Endothelial cell of umbilical vein (primary cell): ENCODE measurements at regions of chr10 and their contacts with region 1.

Region 1: GRCh38 chr10:28628184-28628893 is 49.0 kb upstream of the BAMBI start:
- DNase-seq: peak; percentile 69
- H3K4me3 ChIP-seq: no peak overlapping the region
- H3K27ac ChIP-seq: no peak overlapping the region
- H3K4me1 ChIP-seq: no peaks in the 10 kb centered on the region
- H3K27me3 ChIP-seq: peaks cover 7 to 10% of the 10 kb centered on the region in 2 experiments
- CTCF ChIP-seq: peak; percentile 89 to 91
- POLR2A ChIP-seq: no peak

Region 2: DNA sequence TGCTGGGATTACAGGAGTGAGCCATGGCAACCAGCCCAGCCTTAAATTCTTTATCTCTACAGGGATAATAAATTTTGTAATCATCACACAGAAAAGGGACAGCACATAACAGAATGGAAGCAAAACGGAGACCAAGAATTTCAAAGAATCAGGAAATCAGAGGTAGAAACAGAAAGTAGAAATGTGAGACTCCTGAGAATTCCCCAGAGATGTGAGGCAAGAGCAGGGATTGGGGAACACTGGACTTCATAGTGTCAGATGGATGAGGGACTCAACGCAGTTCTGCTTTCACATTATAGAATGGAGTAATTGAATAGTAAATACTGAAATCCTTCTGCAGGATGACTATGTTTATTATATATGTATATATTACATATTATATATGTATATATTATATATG is 273.0 kb before region 1 on chr10:
- CTCF ChIA-PET with region 1: no interaction called
- POLR2A ChIA-PET with region 1: no interaction called
- dilution Hi-C with region 1: no loop called
- intact Hi-C with region 1: no loop called
- DNase-seq: no peak
- H3K4me3 ChIP-seq: no peak overlapping the region
- H3K27ac ChIP-seq: no peak overlapping the region
- H3K4me1 ChIP-seq: no peaks in the 10 kb centered on the region
- H3K27me3 ChIP-seq: no peaks in the 10 kb centered on the region
- CTCF ChIP-seq: no peak
- POLR2A ChIP-seq: no peak

Region 3: DNA sequence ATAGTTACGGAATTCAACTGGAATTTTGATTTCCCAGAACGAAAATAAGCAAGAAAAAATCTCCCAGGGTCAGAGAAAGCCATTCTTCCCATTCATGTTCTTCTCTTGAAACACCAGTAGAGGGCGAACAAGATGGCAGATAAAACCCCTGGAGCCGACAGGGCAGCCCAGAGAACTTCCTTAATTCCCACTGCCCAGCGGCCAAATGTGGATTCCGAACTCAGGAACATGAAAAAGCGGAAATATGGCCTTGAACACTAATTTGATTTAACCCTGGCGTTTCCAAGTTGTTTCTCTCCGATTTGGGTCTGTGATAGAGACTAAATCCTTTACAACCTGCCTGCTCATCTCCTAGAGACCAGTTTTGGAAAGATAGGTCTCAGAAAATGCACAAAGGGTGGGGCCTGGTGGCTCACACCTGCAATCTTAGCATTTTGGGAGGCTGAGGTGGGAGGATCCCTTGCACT is 196.1 kb before region 1 on chr10:
- CTCF ChIA-PET with region 1: no interaction called
- POLR2A ChIA-PET with region 1: no interaction called
- dilution Hi-C with region 1: no loop called
- intact Hi-C with region 1: loop called (anchors 5 kb)
- DNase-seq: peak; percentile 65
- H3K4me3 ChIP-seq: no peak overlapping the region
- H3K27ac ChIP-seq: no peak overlapping the region
- H3K4me1 ChIP-seq: no peaks in the 10 kb centered on the region
- H3K27me3 ChIP-seq: peaks cover 1% of the 10 kb centered on the region in 2 experiments
- CTCF ChIP-seq: peak; percentile 69 to 76
- POLR2A ChIP-seq: no peak

Region 4: DNA sequence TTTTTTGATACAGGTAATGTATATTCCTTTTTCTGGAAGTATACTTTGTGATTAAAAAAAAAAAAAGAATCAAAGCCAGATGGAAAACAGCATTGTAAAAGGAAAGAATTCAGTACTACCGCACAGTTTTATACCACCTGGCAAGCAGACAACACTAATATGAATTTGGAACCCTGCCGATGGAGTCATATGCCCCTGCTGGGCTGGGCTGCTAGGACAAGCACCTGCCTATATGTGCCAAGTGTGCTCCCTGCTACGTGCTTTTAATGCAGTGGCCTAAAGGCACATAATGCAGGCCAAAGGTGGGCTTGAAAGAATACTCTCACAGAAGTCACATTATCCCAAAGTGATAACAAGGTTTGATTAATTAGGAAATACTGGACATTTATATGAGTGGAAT is 125.2 kb before region 1 on chr10:
- CTCF ChIA-PET with region 1: no interaction called
- POLR2A ChIA-PET with region 1: interaction called, 11 read pairs
- dilution Hi-C with region 1: no loop called
- intact Hi-C with region 1: no loop called
- DNase-seq: peak; percentile 46
- H3K4me3 ChIP-seq: no peak overlapping the region
- H3K27ac ChIP-seq: no peak overlapping the region
- H3K4me1 ChIP-seq: no peaks in the 10 kb centered on the region
- H3K27me3 ChIP-seq: peaks cover 0 to 2% of the 10 kb centered on the region in 2 experiments
- CTCF ChIP-seq: no peak
- POLR2A ChIP-seq: no peak

Region 5: DNA sequence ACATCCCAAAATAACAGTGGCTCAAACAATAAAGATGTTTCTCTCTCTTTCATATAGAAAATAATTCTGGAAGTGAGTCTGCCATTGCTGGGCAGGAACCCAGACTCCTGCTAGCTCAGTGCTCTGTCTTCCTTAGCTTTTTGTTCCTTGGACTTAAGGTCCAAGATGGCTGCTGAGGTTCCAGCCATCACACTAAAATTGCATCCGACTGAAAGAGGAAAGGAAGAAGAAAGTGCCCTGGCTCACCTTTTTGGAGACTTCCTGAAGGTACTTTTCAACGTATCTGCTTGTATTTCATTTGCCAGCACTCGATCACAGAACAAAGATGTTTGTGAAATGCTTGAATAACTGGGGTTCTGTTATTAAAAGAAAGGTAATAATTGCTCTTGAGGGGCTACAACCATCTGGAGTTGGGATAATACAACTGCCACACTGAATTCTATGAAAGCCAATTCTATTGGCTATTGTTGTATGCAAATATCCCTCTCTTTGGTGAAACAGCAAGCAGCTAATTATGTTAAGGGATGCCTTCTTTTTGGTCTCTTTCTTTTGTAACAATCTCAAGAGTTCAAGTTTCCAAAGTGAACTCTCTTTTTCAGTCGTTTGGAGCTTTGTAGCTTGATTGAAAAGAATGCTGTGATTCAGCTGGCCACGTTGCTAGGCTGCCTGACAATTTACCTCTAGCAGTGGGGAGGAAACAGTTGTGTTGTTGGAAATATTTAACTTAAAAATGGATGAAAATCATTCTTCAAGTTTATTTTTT is 132.9 kb after region 1 on chr10:
- CTCF ChIA-PET with region 1: no interaction called
- POLR2A ChIA-PET with region 1: no interaction called
- dilution Hi-C with region 1: no loop called
- intact Hi-C with region 1: no loop called
- DNase-seq: no peak
- H3K4me3 ChIP-seq: no peak overlapping the region
- H3K27ac ChIP-seq: no peak overlapping the region
- H3K4me1 ChIP-seq: no peaks in the 10 kb centered on the region
- H3K27me3 ChIP-seq: peaks cover 4 to 7% of the 10 kb centered on the region in 2 experiments
- CTCF ChIP-seq: no peak
- POLR2A ChIP-seq: no peak

Region 6: GRCh38 chr10:28991326-28992270 is 363.3 kb after region 1 on chr10:
- CTCF ChIA-PET with region 1: interaction called, 21 read pairs
- POLR2A ChIA-PET with region 1: no interaction called
- dilution Hi-C with region 1: no loop called
- intact Hi-C with region 1: loop called (anchors 1 kb)
- DNase-seq: peak; percentile 51
- H3K4me3 ChIP-seq: no peak overlapping the region
- H3K27ac ChIP-seq: no peak overlapping the region
- H3K4me1 ChIP-seq: no peaks in the 10 kb centered on the region
- H3K27me3 ChIP-seq: peaks cover 0 to 4% of the 10 kb centered on the region in 2 experiments
- CTCF ChIP-seq: peak; percentile 70 to 80
- POLR2A ChIP-seq: no peak

Region 7: GRCh38 chr10:29229258-29229705 is 600.9 kb after region 1 on chr10:
- CTCF ChIA-PET with region 1: no interaction called
- POLR2A ChIA-PET with region 1: no interaction called
- dilution Hi-C with region 1: no loop called
- intact Hi-C with region 1: no loop called
- DNase-seq: no peak
- H3K4me3 ChIP-seq: no peak overlapping the region
- H3K27ac ChIP-seq: no peak overlapping the region
- H3K4me1 ChIP-seq: no peaks in the 10 kb centered on the region
- H3K27me3 ChIP-seq: peaks cover 2 to 12% of the 10 kb centered on the region in 2 experiments
- CTCF ChIP-seq: no peak
- POLR2A ChIP-seq: no peak

Region 8: DNA sequence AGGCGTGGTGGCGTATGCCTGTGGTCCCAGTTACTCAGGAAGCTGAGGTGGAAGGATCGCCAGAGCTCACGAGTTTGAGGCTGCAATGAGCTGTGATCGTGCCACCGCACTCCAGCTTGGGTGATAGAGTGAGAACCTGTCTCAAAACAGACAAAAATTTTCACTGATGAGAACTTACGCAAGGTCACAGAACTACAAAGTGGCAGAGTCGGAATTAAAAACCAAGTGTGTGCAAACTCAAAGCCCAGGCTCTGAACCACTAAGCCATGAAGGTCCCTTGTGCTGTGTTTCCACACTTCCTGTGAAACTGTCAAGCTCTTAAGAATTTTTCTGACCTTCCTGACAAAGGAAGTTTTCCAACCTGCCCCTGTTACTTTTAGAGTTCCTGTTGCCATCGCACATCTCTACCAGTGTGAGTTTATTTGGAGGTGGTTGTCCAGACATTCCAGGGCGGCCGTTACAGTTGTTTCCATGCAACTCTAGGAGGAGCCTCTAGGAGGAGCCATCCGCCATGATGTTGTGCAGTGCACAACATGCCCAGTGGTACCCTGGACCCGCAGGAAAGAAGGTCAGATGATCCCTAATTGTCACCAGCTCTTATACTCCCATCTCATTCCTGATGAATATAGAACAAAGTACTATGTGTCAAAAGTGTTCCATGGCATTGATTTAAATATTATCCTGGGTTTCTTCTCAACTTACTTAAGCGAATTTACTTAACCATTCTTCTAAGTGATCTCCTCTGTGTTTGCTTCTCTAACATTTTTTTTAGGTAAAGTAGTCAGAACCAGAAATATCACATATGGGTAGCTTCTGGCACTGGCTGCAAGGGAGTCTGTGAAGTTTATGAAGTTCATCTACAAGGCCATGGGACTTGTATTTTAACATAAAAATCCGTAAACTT is 611.5 kb after region 1 on chr10:
- CTCF ChIA-PET with region 1: no interaction called
- POLR2A ChIA-PET with region 1: no interaction called
- dilution Hi-C with region 1: no loop called
- intact Hi-C with region 1: loop called (anchors 10 kb)
- DNase-seq: peak; percentile 4
- H3K4me3 ChIP-seq: no peak overlapping the region
- H3K27ac ChIP-seq: no peak overlapping the region
- H3K4me1 ChIP-seq: no peaks in the 10 kb centered on the region
- H3K27me3 ChIP-seq: peaks cover 0 to 2% of the 10 kb centered on the region in 2 experiments
- CTCF ChIP-seq: peak; percentile 39 to 52
- POLR2A ChIP-seq: no peak